Natural killer cell (primary cell): ENCODE measurements at regions of chr14 and their contacts with region 1.

Region 1: DNA sequence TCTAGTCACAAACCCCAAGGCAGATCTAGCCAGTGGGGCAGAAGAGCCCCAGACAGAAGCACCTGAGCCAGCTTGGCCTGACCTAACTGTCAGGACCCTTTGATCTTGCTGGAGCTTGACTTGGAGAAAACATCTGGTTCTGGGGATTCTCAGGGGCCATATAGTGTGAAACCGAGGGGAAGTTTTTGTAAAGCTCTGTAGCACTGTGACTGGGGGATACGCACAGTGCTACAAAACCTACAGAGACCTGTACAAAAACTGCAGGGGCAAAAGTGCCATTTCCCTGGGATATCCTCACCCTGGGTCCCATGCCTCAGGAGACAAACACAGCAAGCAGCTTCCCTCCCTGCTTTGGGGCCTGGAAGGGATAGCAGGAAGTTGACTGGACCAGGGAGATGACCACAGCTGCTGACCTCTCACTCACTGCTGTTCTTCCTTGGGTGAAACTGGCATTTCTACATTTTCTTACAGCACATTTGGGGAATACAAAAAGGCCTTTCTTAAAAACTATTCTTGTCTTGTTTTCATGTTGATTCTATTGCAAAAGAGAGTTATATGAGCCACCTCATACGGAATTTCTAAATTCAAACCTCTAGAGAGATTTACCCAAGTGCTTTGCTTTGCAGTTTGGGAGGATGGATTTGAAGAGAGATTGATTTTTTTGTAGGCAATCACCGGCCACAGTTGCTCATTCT is 140.0 kb downstream of the DAD1 start:
- DNase-seq: peak in 1 of 2 donors; percentile 42
- ATAC-seq: peak; percentile 58 to 73 (median 70)
- H3K4me3 ChIP-seq: peak overlapping the region; percentile 62
- H3K4me3 Mint-ChIP-seq: peak overlapping the region; percentile 96
- H3K27ac ChIP-seq: peak overlapping the region; percentile 79
- H3K27ac Mint-ChIP-seq: peak overlapping the region; percentile 80 to 89
- H3K4me1 ChIP-seq: peaks cover 58% of the 10 kb centered on the region
- H3K4me1 Mint-ChIP-seq: peaks cover 85 to 91% of the 10 kb centered on the region in 2 donors
- H3K27me3 ChIP-seq: no peaks in the 10 kb centered on the region
- H3K27me3 Mint-ChIP-seq: no peaks in the 10 kb centered on the region
- CTCF ChIP-seq: no peak

Region 2: GRCh38 chr14:22432348-22432976 is 16.6 kb before region 1 on chr14:
- intact Hi-C with region 1: loop called (anchors 2 kb)
- DNase-seq: no peak
- ATAC-seq: no peak
- H3K4me3 ChIP-seq: no peak overlapping the region
- H3K4me3 Mint-ChIP-seq: peak overlapping the region; percentile 62
- H3K27ac ChIP-seq: no peak overlapping the region
- H3K27ac Mint-ChIP-seq: peak overlapping the region; percentile 89 to 93
- H3K4me1 ChIP-seq: peaks cover 58% of the 10 kb centered on the region
- H3K4me1 Mint-ChIP-seq: peaks cover 69 to 79% of the 10 kb centered on the region in 2 donors
- H3K27me3 ChIP-seq: no peaks in the 10 kb centered on the region
- H3K27me3 Mint-ChIP-seq: no peaks in the 10 kb centered on the region
- CTCF ChIP-seq: no peak

Region 3: DNA sequence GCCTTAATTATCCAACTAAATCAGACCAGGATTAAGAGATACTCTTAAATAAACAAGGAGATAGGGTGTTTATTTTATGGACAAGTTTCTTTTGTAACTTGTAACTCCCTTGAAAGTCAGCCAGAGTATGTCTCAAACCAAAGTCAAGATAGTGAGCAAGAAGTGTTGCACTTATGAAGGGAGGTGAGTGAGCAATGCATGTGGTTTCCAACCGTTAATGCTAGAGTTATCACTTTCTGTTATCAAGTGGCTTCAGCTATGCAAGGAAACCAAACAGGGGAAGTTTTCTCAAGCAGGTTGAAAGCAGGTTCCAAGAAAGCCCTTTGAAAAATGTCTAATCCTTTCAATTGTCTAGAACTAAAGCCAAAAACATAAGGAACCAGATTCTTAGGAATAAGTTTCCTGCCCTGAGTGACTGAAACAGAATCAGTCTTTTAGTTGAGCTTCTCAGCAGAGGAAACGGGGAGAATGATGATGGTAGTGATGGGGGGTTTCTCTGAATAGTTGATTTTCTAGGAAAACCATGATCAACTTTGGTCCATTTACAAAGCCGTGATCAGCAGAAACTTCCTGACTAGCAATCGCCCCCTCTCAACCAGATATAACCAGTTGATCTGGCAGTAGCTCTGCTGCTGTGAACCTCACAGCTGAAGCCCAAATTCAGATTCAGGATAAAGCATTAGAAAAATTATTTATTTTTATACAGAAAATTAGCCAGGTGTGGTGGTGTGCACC is 11.6 kb after region 1 on chr14:
- intact Hi-C with region 1: loop called (anchors 1 kb)
- DNase-seq: peak in 1 of 2 donors; percentile 44
- ATAC-seq: peak; percentile 82 to 94 (median 92)
- H3K4me3 ChIP-seq: peak overlapping the region; percentile 62
- H3K4me3 Mint-ChIP-seq: peak overlapping the region; percentile 96
- H3K27ac ChIP-seq: peak overlapping the region; percentile 79
- H3K27ac Mint-ChIP-seq: peak overlapping the region; percentile 80 to 89
- H3K4me1 ChIP-seq: peaks cover 67% of the 10 kb centered on the region
- H3K4me1 Mint-ChIP-seq: peaks cover 93 to 98% of the 10 kb centered on the region in 2 donors
- H3K27me3 ChIP-seq: no peaks in the 10 kb centered on the region
- H3K27me3 Mint-ChIP-seq: no peaks in the 10 kb centered on the region
- CTCF ChIP-seq: no peak